ENCODE measurements at regions of chr14 and their contacts with region 1.

Region 1: GRCh38 chr14:78043349-78043748 is 126.8 kb upstream of the NRXN3 start:
- DNase-seq: no peak
- H3K4me3 ChIP-seq: no peak overlapping the region
- H3K27ac ChIP-seq: no peak overlapping the region
- H3K4me1 ChIP-seq: no peaks in the 10 kb centered on the region
- H3K27me3 ChIP-seq: peaks cover 70% of the 10 kb centered on the region
- CTCF ChIP-seq: no peak

Region 2: GRCh38 chr14:78088916-78089315 is 45.6 kb after region 1 on chr14:
- CTCF ChIA-PET with region 1: no interaction called
- POLR2A ChIA-PET with region 1: no interaction called
- intact Hi-C with region 1: no loop called
- DNase-seq: no peak
- H3K4me3 ChIP-seq: no peak overlapping the region
- H3K27ac ChIP-seq: no peak overlapping the region
- H3K4me1 ChIP-seq: no peaks in the 10 kb centered on the region
- H3K27me3 ChIP-seq: peaks cover 86% of the 10 kb centered on the region
- CTCF ChIP-seq: no peak

Region 3: GRCh38 chr14:78196323-78196722 is 153.0 kb after region 1 on chr14:
- CTCF ChIA-PET with region 1: no interaction called
- POLR2A ChIA-PET with region 1: interaction called, 10 read pairs
- intact Hi-C with region 1: no loop called
- DNase-seq: no peak
- H3K4me3 ChIP-seq: no peak overlapping the region
- H3K27ac ChIP-seq: no peak overlapping the region
- H3K4me1 ChIP-seq: no peaks in the 10 kb centered on the region
- H3K27me3 ChIP-seq: peaks cover 59% of the 10 kb centered on the region
- CTCF ChIP-seq: no peak

Region 4: DNA sequence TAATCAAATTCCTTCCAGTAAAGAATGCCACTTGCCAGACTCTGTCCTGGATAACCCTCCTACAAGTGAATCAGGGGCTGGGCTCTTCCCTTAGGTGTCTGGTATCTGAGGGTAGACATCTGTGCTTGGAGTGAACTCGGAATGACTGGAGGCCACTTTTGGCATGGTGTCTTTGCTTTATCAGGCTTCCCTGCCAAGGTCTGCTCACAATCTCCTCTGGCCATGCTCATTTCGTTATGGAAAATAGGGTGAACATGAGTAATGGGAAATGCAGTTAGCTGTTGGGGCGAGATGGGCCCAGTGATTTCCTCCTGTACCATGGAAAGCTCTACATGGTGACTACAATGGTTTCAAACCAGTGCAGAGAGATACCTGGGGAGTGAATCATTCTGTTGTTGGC is 339.7 kb after region 1 on chr14:
- CTCF ChIA-PET with region 1: no interaction called
- POLR2A ChIA-PET with region 1: no interaction called
- intact Hi-C with region 1: no loop called
- DNase-seq: no peak
- H3K4me3 ChIP-seq: no peak overlapping the region
- H3K27ac ChIP-seq: no peak overlapping the region
- H3K4me1 ChIP-seq: no peaks in the 10 kb centered on the region
- H3K27me3 ChIP-seq: peaks cover 7% of the 10 kb centered on the region; the same call in 1 of the 2 replicates
- CTCF ChIP-seq: no peak

Measured in PC-9 (cell line).